Pancreas (tissue), 10 donors: ENCODE measurements at regions of chr6 and their contacts with region 1.

Region 1: GRCh38 chr6:168355716-168356449 is 36.3 kb upstream of the DACT2 start:
- DNase-seq: peak; percentile 38 to 87 (median 70)
- ATAC-seq: peak; percentile 88 to 100 (median 99)
- H3K4me3 ChIP-seq: no peak overlapping the region
- H3K27ac ChIP-seq: no peak overlapping the region
- H3K4me1 ChIP-seq: no peaks in the 10 kb centered on the region
- H3K27me3 ChIP-seq: no peaks in the 10 kb centered on the region
- CTCF ChIP-seq: peak; percentile 68 to 76 (median 72)

Region 2: DNA sequence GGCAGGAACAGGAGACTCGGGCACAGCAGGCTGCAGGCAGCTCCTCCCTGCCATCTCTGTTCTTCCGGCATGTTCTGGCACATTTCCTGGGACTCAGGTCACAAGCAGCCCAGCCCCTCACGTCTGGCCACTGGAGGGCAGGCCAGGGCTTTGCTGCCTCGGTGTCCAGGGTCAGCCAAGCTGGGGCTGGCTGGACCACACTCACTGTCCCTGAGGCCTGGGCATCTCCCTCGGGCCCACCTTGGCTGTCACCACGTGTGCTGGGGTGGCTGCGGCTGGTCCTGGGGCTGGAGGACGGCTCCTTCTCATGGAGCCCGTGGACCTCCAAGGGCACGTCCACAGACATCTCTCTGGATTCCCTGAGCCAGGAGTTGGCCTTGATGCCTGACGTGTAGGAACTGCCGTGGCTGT is 295.4 kb before region 1 on chr6:
- intact Hi-C with region 1: no loop called
- DNase-seq: peak; percentile 73 to 89 (median 82)
- ATAC-seq: peak; percentile 89 to 98 (median 92)
- H3K4me3 ChIP-seq: no peak overlapping the region
- H3K27ac ChIP-seq: no peak overlapping the region
- H3K4me1 ChIP-seq: no peaks in the 10 kb centered on the region
- H3K27me3 ChIP-seq: no peaks in the 10 kb centered on the region
- CTCF ChIP-seq: peak in 3 of 4 donors; percentile 47 to 65 (median 53)

Region 3: GRCh38 chr6:168157272-168158007 is 198.4 kb before region 1 on chr6:
- intact Hi-C with region 1: loop called in 1 of 3 experiments (anchors 10 kb)
- DNase-seq: no peak
- ATAC-seq: peak in 3 of 4 donors; percentile 43 to 71 (median 55)
- H3K4me3 ChIP-seq: no peak overlapping the region
- H3K27ac ChIP-seq: no peak overlapping the region
- H3K4me1 ChIP-seq: peaks cover 0 to 4% (median 0%) of the 10 kb centered on the region in 3 donors
- H3K27me3 ChIP-seq: no peaks in the 10 kb centered on the region
- CTCF ChIP-seq: no peak

Region 4: DNA sequence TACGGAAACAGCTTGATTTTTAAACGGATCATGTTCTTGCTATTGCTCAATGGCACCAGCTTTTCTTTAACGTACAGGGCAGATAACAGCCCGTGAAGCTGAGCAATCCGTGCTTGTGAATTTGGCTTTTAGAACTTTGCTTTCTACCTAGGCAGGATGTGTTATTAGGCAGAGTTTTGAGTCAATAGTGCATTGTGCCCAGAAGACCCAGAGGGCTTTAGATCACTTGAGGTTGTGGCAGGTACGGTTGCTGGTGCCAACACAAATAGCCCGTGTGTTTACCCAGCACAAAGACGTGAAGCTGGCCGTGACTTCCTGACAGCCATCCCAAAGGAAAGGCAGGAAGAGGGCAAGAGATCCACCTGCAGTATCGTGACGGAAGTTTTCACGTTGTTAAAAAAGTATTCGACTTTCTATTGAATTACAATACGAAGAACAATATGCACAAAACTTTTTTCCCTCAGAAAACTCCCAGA is 159.5 kb before region 1 on chr6:
- intact Hi-C with region 1: loop called in 1 of 3 experiments (anchors 5 kb)
- DNase-seq: peak in 4 of 6 donors; percentile 56 to 75 (median 66)
- ATAC-seq: peak; percentile 87 to 94 (median 92)
- H3K4me3 ChIP-seq: no peak overlapping the region
- H3K27ac ChIP-seq: peak overlapping the region in 2 of 4 donors; percentile 23 to 57
- H3K4me1 ChIP-seq: peaks cover 6 to 10% (median 9%) of the 10 kb centered on the region in 3 donors
- H3K27me3 ChIP-seq: no peaks in the 10 kb centered on the region
- CTCF ChIP-seq: no peak

Region 5: DNA sequence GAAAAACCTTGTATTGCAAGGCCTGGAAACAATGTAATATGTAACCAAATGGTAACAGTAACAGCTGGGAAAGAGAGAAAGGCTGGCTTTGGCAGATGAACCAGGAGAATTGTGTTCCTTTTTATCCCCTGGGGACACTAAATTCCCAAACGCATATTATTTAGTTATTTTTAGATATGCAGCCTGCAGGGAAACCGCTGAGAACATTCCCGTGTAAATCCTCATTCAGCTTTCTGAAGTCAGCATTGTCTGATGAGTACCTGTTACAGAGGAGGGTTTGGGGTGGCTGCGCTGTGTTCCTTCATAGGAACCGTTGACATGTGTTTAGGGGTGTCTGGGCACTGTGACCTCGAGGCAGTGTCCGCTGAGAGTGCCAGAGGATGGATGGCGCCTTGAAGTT is 186.4 kb after region 1 on chr6:
- intact Hi-C with region 1: no loop called
- DNase-seq: no peak
- ATAC-seq: no peak
- H3K4me3 ChIP-seq: no peak overlapping the region
- H3K27ac ChIP-seq: no peak overlapping the region
- H3K4me1 ChIP-seq: no peaks in the 10 kb centered on the region
- H3K27me3 ChIP-seq: no peaks in the 10 kb centered on the region
- CTCF ChIP-seq: no peak